ENCODE measurements at regions of chr1 and their contacts with region 1.

Region 1: DNA sequence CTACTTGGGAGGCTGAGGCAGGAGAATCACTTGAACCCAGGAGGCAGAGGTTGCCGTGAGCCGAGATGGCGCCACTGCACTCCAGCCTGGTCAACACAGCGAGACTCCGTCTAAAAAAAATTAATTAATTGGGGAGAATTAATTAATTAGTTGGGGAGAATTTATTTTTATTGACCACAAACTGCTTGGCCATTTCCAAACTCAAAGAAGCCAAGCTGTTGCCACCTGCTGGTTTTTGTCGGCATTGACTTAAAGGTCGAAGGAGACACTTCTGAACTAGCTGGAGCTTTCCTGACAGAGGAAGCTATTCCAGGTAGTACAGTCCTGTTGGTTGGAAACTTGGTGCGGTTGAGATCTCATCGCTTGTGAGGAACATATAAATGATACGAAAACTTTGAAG is 13.1 kb downstream of the MAP1LC3C start:
- DNase-seq: peak; percentile 47
- H3K27ac ChIP-seq: peak overlapping the region; percentile 33
- CTCF ChIP-seq: no peak; the same call in 1 of the 2 replicates

Region 2: DNA sequence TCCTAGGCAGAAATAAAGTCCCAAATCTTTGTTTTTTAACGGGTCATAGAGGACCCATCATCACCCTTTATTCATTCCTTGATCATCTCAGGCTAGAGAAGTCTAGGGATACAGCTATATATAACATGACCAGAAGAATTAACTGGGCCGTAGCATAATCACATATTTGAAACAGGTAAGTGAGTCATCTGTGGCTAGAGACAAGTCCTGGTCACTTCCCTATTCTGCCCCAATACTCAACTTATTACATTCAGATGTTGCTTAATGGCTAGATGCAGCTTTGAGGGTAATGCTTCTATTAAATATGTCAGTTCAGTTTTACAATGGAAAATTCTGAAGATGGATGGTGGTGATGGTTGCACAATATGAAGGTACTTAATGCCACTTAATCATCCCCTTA is 90.8 kb before region 1 on chr1:
- CTCF ChIA-PET with region 1: interaction called, 17 read pairs
- POLR2A ChIA-PET with region 1: no interaction called
- DNase-seq: peak; percentile 8
- H3K27ac ChIP-seq: no peak overlapping the region
- CTCF ChIP-seq: no peak

Region 3: DNA sequence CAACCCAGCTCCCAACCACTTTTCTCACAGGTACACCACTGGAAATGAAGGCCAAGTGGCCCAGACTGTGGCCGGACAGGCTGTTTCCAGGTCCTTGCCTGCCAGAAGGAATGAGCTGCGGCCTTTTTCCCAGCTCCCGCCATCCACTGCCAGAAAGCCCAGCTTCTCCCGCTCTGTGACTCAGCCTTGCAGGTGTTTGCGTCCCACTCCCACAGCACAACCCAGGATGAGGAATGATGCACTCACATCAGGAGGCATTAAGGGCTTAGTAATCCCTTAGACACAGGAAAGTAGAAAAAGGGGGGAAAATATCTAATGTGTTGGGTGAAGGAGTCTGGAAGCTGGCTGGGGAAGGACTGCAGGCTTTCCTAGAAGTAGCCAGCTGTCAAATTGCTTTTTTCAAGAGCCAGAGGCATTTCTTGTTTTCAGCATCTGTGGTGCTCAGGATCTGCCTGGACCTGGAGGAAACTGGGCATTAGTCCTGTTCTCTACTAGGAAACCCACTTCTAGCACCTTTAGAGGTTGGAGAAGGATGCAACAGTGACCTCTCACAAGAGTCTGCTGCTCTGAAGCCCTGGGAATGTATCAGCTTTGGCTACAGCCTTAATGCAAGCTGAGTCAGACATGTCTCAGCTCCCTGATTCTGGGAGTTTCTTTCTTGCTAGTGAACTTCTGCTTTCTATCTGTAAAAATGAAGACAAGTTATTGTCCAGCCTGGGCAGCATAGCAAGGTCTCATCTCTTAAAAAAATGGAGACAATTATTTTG is 26.3 kb after region 1 on chr1:
- CTCF ChIA-PET with region 1: no interaction called
- POLR2A ChIA-PET with region 1: no interaction called
- DNase-seq: no peak
- H3K27ac ChIP-seq: no peak overlapping the region
- CTCF ChIP-seq: no peak